RWPE1 (cell line): ENCODE measurements at regions of chr5 and their contacts with region 1.

Region 1: DNA sequence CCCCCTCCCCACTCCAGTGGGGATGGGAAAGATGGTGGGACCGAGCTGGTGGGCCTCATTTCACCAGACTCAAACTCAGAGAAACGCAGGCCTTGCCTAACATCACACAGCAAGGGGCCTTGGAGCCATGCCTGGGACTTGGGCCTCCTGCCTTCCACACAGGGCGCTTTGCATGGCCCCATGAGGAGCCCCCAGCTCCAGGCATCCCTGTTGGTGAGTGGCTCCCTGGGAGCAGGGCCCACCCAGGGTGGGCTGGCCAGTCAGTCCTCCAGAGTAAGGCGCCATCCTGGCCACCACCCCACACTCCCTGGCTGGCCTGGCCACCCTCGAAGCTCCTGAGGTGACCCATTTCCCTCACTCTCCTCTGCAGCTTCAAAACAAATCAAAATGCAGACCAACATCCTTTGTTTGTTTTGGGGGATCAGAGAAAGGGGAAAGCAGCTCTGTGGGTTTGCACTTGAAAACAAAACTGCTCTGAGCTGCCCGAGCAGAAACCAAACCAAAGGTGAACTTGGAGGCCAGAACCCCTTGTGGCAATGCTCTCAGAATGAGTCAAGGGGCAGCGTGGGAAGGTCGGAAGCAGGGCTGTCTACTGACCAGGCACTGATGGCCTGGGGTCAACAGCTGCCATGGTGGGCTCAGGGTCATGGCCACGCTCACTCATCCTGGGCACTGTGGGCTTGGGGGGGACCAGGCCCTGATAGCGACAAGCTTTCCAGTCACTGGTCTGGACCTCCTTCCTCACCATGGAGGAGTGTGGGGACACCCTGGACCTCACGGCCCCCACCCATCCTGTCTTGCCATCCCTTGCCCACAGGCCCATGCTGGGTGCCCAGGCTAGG is 37.0 kb upstream of the VDAC1 start:
- DNase-seq: no peak
- H3K27ac ChIP-seq: no peak overlapping the region
- CTCF ChIP-seq: no peak

Region 2: GRCh38 chr5:133910571-133910970 is 131.2 kb before region 1 on chr5:
- CTCF ChIA-PET with region 1: no interaction called
- POLR2A ChIA-PET with region 1: no interaction called
- DNase-seq: no peak
- H3K27ac ChIP-seq: no peak overlapping the region
- CTCF ChIP-seq: no peak

Region 3: DNA sequence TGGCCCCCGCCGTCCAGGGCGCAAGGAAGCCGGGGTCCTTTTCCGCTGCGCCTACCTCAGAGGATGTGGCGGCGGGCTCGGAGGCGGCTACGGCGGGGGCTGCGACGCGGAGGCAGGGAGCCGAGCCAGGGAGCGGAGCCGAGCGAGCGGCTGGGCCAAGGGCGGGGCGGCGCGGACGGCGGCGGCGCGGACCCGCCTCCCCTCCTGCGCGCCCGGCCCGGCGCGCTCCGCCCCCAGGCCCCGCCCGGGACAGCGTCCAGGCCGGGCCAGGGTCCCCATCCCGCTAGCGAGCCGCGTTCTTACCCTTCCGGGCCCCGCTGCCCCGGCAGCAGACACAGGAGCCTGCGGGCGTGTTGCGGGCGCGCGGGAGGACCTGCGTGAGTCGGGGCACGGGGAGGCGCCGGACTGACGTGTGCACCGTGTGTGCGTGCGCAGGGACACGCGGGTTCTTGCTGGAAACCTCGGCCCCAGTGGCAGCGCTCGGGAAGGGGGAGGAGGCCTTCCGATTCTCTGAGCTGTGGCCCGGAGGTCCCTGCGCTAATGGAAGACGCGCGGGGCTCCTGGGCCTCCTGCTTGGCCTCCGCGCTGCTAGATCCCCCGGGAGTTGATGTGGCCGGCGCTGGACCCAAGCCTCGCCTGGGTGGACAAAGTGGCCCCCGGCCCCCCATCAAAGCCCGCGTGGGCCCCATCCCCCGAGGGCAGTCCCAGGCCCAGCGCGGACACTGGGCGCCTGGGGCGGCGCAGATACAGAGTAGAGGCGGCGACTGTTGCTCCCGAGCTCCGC is 37.0 kb before region 1 on chr5 and contains the start of gene VDAC1:
- CTCF ChIA-PET with region 1: interaction called, 10 read pairs
- POLR2A ChIA-PET with region 1: no interaction called
- DNase-seq: peak; percentile 95
- H3K27ac ChIP-seq: peak within 1 kb of the TSS; percentile 94
- CTCF ChIP-seq: no peak

Region 4: GRCh38 chr5:134063188-134063820 is 21.5 kb after region 1 on chr5:
- CTCF ChIA-PET with region 1: interaction called, 14 read pairs
- POLR2A ChIA-PET with region 1: no interaction called
- DNase-seq: no peak
- H3K27ac ChIP-seq: peak overlapping the region; percentile 57
- CTCF ChIP-seq: no peak

Region 5: GRCh38 chr5:134092878-134093277 is 51.1 kb after region 1 on chr5:
- CTCF ChIA-PET with region 1: interaction called, 18 read pairs
- POLR2A ChIA-PET with region 1: no interaction called
- DNase-seq: peak; percentile 91
- H3K27ac ChIP-seq: no peak overlapping the region
- CTCF ChIP-seq: no peak

Region 6: GRCh38 chr5:134125039-134126015 is 83.5 kb after region 1 on chr5:
- CTCF ChIA-PET with region 1: interaction called, 16 read pairs
- POLR2A ChIA-PET with region 1: no interaction called
- DNase-seq: peak; percentile 86
- H3K27ac ChIP-seq: peak overlapping the region; percentile 95
- CTCF ChIP-seq: no peak

Region 7: GRCh38 chr5:134289509-134290113 is 247.8 kb after region 1 on chr5:
- CTCF ChIA-PET with region 1: interaction called, 10 read pairs
- POLR2A ChIA-PET with region 1: no interaction called
- DNase-seq: peak; percentile 88
- H3K27ac ChIP-seq: no peak overlapping the region
- CTCF ChIP-seq: peak; percentile 86

Region 8: GRCh38 chr5:134312796-134313195 is 271.0 kb after region 1 on chr5:
- CTCF ChIA-PET with region 1: no interaction called
- POLR2A ChIA-PET with region 1: no interaction called
- DNase-seq: no peak
- H3K27ac ChIP-seq: no peak overlapping the region
- CTCF ChIP-seq: no peak

Region 9: GRCh38 chr5:134741052-134741451 is 699.3 kb after region 1 on chr5:
- CTCF ChIA-PET with region 1: no interaction called
- POLR2A ChIA-PET with region 1: no interaction called
- DNase-seq: no peak
- H3K27ac ChIP-seq: no peak overlapping the region
- CTCF ChIP-seq: no peak